ENCODE measurements at regions of chr1 and their contacts with region 1.

Region 1: DNA sequence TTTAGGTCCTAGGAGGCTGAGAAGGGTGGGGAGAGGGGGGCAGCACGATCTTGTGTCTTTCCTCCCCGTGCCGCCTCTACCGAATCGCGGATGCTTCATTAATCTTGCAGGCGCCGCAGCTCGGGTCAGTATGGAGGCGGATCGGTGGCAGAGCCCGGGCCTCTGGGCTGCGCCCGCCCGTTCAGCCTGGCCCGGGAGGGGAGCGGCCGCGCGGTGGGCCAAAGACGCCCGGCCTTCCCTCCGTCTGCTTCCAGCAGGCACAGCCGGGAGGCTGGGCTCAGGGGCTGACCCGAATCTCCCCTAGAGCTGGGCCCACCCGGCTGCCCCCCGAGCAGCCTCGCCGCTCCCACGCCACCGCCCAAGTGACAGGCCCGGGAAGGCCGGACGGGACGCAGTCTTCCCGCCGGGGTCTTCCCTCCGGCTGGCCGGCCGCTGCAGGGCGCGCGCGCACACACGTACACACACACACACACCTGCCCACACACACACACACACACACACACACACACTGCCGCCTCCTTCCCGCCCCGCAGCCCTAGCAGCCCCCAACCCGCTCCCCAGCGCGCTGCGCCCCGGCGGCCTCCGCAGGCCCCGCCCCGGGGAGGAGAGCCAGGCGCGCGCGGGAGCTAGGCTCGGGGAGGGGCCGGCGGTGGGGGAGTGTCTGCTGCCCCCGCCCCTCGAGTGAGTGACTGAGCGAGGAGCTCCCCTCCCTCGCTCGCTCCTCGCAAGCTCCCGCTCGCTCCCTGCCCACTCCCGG is at the start of gene C1orf21:
- DNase-seq: peak; percentile 93
- H3K4me3 ChIP-seq: peak within 1 kb of the TSS; percentile 98
- H3K27ac ChIP-seq: peak within 1 kb of the TSS; percentile 93 to 94
- H3K4me1 ChIP-seq: no peaks in the 10 kb centered on the region
- H3K27me3 ChIP-seq: no peaks in the 10 kb centered on the region
- CTCF ChIP-seq: peak in 1 of 4 experiments; percentile 5
- POLR2A ChIP-seq: peak; percentile 95
- total RNA-seq, gene C1orf21: 28.8 to 79.3 TPM

Region 2: GRCh38 chr1:184472136-184472535 is 85.6 kb after region 1 on chr1:
- intact Hi-C with region 1: no loop called
- DNase-seq: no peak
- H3K4me3 ChIP-seq: no peak overlapping the region
- H3K27ac ChIP-seq: peak overlapping the region in 1 of 2 donors; percentile 37
- H3K4me1 ChIP-seq: no peaks in the 10 kb centered on the region
- H3K27me3 ChIP-seq: no peaks in the 10 kb centered on the region
- CTCF ChIP-seq: no peak
- POLR2A ChIP-seq: no peak

Region 3: DNA sequence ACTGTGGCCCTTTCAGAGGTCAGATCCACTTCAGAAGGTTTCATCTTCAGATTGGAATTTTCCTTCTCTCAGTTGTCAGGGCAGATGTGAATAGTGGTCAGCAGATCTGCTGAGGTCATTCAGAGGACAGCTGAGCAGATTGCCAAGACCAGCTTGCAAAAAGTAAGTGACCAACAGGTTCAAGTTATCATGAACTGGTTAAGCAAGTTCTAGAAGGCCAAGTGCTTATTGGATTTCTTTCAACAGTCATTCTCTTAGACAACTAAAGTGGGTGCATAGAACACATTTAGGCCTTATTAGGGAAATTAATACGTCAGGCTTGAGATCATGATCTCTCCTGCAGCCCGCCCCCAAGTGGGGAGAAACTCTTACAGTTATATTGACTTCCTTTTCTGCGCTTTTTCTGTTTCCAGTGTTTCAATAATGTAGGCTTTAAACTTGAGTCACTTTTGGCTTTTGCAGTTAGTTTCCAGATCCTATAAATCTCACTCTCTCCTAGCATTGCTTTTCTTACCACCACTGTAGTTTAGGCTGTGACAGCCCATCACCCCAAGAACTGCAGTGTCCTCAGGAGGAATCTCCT is 96.7 kb after region 1 on chr1:
- intact Hi-C with region 1: loop called (anchors 5 kb)
- DNase-seq: peak; percentile 61
- H3K4me3 ChIP-seq: no peak overlapping the region
- H3K27ac ChIP-seq: peak overlapping the region; percentile 75 to 79
- H3K4me1 ChIP-seq: peaks cover 4% of the 10 kb centered on the region
- H3K27me3 ChIP-seq: no peaks in the 10 kb centered on the region
- CTCF ChIP-seq: no peak
- POLR2A ChIP-seq: no peak

Region 4: DNA sequence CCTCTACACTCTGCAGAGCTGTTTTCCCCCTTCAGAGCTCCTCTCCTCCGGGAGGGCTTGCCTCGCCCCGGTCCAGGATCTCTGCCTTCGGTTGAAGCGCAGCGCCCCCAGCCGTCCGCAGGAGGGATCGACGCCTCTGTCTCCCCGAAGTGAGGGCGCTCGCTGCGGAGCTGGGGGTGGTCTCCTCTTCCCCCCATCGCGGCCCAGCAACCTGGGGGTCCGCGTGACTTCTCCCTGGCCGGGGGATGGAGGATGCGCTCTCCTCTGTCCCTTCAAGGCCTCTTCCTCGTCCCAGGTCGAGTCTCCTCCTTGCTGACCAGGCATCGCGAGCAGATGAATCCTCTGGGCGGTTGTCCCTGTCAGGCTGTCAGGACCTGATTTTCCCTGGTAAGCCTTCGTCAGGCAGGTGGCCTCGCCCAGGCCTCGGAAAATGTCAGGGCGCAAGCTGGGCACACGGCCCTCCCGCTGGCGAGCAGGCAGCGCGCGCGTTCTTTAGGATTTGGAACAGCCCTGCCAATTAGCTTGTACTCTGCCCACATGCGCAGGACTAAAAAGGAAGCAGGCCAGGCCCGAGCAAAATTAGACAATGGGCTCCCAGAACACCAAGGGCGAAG is 277.7 kb after region 1 on chr1:
- intact Hi-C with region 1: loop called (anchors 2 kb)
- DNase-seq: peak; percentile 73
- H3K4me3 ChIP-seq: peak overlapping the region in 1 of 2 donors; percentile 14
- H3K27ac ChIP-seq: peak overlapping the region; percentile 34 to 47
- H3K4me1 ChIP-seq: peaks cover 15% of the 10 kb centered on the region
- H3K27me3 ChIP-seq: no peaks in the 10 kb centered on the region
- CTCF ChIP-seq: peak; percentile 82 to 90 (median 86)
- POLR2A ChIP-seq: no peak

Measured in prostate gland (tissue), 2 donors.